ENCODE measurements at regions of chr6 and their contacts with region 1.

Region 1: DNA sequence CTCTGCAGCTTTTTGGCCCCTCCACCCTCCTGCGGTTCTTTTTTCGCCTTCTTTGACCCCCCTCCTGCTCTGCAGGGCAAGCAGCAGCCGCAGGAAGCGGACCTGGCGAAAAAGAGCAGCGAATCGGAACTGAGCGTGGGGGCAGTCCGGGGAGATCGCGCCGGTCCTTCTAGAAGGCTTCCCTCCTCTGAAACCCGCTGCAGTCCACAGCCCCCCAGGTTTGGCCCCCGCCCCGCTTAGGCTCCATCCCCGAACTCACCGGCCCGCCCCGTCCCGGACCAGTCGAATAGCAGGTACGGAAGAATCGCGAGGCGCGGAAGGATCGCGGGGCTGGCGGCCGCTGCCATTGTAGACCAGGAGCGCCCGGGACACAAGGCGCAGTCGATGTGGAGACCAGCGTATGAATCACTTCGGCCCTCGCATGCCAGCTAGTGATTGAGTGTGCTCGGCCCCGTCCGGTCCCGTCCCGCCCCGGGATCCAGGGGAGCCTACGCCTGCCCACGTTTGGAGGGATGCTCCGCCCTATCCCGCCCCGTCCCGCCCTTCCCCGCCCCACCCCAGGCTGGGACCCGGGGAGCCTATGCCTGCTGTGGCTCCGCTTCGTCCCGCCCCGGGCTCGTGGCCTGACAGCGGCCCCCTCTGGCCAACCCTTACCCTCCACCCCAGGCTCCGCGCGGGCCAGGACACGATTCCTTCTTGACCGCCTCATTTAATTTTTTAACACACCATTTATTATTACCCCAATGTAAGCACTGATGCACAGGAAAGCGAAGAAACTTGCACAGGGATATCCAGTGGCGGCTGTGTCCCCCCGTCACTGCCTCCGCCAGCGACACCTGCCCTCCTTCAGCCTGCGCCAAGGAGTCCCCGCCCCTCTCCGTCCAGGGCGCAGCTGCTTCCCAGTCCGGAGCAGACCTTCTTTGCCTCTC is at the start of gene ULBP3:
- H3K4me3 ChIP-seq: peak within 1 kb of the TSS; percentile 70
- H3K27ac ChIP-seq: peak within 1 kb of the TSS; percentile 65
- H3K4me1 ChIP-seq: peaks cover 6% of the 10 kb centered on the region; the same call in 1 of the 2 replicates
- CTCF ChIP-seq: peak; percentile 65

Region 2: GRCh38 chr6:150056156-150056555 is 12.8 kb before region 1 on chr6:
- CTCF ChIA-PET with region 1: interaction called, 19 read pairs
- POLR2A ChIA-PET with region 1: interaction called, 24 read pairs
- H3K4me3 ChIP-seq: no peak overlapping the region
- H3K27ac ChIP-seq: no peak overlapping the region
- H3K4me1 ChIP-seq: no peaks in the 10 kb centered on the region
- CTCF ChIP-seq: no peak

Region 3: DNA sequence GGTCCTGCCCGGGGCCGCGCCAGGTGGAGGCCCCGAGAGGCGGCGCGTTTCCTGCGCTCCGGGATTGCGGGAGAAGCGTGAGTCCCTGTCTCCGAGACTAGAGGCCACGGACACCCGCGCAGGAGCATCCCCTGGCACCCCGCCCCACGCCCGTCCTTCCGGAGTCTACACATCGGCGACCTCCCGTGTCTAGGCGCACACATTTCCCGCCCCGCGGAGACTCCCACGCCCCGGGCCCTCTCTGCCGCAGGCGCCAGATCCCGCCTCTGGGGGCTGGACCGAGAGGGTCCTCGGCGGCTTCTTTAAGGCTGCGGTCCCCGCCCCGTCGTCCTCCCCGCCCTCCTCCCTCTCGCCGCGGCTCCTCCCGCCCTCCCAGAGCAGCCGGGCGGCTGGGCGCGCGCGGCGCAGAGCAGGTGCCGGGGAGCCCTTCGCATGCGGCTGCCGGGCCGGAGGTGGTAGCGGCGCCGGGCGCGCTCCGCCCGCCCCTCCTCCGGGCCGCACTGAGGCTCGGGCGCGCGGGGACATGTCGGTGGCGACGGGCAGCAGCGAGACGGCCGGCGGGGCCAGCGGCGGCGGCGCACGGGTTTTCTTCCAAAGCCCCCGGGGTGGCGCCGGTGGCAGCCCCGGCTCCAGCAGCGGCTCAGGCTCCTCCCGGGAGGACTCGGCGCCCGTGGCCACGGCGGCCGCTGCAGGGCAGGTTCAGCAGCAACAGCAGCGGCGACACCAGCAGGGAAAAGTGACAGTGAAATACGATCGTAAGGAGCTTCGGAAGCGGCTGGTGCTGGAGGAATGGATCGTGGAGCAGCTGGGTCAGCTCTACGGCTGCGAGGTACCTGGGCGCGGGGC is 73.9 kb after region 1 on chr6 and contains the start of gene PPP1R14C:
- CTCF ChIA-PET with region 1: interaction called, 10 read pairs
- POLR2A ChIA-PET with region 1: interaction called, 5 read pairs
- H3K4me3 ChIP-seq: peak within 1 kb of the TSS; percentile 79
- H3K27ac ChIP-seq: peak within 1 kb of the TSS; percentile 90
- H3K4me1 ChIP-seq: peaks cover 33% of the 10 kb centered on the region
- CTCF ChIP-seq: peak; percentile 75

Region 4: GRCh38 chr6:150334790-150335783 is 266.1 kb after region 1 on chr6:
- CTCF ChIA-PET with region 1: interaction called, 10 read pairs
- POLR2A ChIA-PET with region 1: no interaction called
- H3K4me3 ChIP-seq: no peak overlapping the region
- H3K27ac ChIP-seq: no peak overlapping the region
- H3K4me1 ChIP-seq: peaks cover 2% of the 10 kb centered on the region; the same call in 1 of the 2 replicates
- CTCF ChIP-seq: no peak; the same call in 1 of the 2 replicates